GM13977 (cell line): ENCODE measurements at regions of chr18 and their contacts with region 1.

Region 1: GRCh38 chr18:21914739-21915319 is 174.2 kb downstream of the MIB1 start:
- DNase-seq: no peak
- CTCF ChIP-seq: peak; percentile 41

Region 2: DNA sequence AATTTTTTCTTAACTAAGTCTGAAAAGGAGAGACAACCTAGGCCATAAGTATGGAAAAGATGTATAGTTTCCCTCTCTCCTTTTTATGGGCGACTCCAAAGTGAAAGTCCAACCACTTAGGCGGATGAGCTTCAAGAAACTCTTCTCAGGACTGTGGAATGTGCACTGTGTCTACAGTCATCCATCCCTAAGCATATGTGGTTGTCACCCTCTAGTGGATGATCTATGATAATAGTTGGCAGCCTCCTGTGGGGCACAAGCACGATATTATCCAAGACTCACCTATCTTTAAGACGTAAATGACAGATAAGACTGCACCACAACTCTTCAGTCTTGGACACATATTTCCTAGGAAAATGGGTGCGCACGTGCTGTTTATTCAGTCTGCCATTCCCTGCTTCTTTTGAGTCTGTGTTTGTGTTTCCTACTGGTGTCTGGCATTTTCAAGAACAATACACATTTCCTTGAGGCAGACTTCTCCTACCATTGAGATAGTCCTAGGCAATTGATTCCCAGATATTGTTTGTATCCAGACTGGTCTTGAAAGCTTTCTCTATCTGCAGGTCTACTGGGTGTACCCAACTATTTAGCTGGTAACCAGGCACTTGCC is 648.4 kb after region 1 on chr18:
- in situ Hi-C with region 1: loop called (anchors 25 kb)
- DNase-seq: peak; percentile 75
- CTCF ChIP-seq: peak; percentile 66